CD8-positive, alpha-beta memory T cell (primary cell): ENCODE measurements at regions of chr7 and their contacts with region 1.

Region 1: DNA sequence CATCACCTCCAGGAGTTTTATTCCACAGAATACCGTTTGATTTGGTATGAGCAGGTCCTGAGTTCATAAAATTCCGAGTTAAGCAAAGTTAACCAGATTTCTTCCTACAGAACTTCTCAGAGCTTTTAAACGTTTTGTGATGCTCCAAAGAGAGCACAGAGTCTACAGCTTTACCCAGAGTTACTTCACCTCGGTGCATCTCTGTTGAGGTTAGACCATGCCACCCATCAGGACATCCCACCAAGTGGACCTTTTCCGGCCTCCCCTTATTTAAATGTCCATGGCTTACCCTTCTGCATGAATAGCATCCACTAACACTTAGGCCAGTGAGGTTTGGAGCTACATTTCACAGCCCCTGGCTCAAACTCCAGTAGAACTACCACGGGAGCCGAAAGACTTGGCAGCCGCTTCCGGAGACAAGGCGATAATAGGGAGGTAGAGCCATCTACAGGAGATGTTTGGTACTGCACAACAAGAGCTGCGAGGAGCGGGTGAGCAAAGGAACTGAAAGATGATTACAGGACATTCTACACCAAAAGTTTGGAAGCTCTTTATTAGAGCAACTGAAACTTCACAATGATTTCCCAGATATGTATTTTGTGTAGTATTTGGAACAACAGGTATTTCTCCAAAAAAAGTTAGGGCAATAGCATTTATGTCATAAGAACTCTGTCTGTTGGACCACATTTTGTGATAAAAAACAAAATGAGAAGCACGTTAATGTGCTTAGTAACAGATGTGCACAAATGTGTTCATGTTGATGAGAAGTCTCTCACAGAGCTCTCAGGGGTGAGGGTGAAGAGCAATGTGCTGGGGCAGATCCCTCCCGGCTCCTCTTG is 174.7 kb downstream of the HERPUD2 start:
- DNase-seq: peak; percentile 19 to 59 (median 25)
- H3K4me3 ChIP-seq: no peak overlapping the region
- H3K4me3 Mint-ChIP-seq: no peak overlapping the region
- H3K27ac ChIP-seq: no peak overlapping the region
- H3K27ac Mint-ChIP-seq: no peak overlapping the region
- H3K4me1 ChIP-seq: no peaks in the 10 kb centered on the region
- H3K4me1 Mint-ChIP-seq: no peaks in the 10 kb centered on the region
- H3K27me3 ChIP-seq: no peaks in the 10 kb centered on the region
- H3K27me3 Mint-ChIP-seq: peaks cover 3 to 20% of the 10 kb centered on the region in 2 donors

Region 2: DNA sequence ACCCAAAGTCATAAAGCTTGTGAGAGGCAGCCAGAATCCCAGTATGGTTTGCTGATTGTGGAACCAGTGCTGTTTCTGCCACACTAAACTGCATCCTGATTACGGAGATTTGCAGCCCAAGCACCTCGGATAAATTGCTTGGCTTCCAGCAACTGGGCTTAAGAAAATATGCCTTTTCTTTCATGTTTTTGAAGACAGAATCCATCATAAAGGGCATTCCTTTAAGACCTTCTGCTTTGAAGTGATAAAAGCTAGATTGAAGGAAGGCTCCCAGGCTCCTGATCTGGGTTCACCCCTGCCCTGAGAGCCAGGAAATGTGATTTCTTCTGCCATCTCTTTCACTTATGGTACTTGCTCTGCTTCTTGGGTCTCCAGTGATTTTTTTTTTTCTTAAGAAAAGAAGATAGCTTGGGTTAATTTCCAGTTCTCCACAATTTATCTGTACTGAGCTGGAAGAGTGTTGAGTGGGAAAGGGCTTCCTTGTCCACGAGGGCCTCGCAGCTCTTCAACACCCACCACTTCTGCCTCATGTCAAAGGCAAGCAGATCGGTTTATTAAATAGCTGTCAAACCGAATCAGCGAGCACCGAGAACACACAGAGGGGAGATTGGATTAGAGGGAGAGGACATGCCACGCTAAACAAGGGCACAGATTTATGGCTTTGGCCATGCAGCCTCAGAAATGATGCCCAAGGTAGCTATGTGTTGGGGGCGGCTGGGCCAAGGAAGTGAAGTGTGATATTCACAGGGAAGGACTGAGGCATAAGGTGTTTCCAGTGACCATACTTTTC is 171.4 kb before region 1 on chr7:
- CTCF ChIA-PET with region 1: no interaction called
- POLR2A ChIA-PET with region 1: no interaction called
- DNase-seq: no peak
- H3K4me3 ChIP-seq: no peak overlapping the region
- H3K4me3 Mint-ChIP-seq: no peak overlapping the region
- H3K27ac ChIP-seq: no peak overlapping the region
- H3K27ac Mint-ChIP-seq: no peak overlapping the region
- H3K4me1 ChIP-seq: no peaks in the 10 kb centered on the region
- H3K4me1 Mint-ChIP-seq: no peaks in the 10 kb centered on the region
- H3K27me3 ChIP-seq: no peaks in the 10 kb centered on the region
- H3K27me3 Mint-ChIP-seq: peaks cover 11 to 23% of the 10 kb centered on the region in 2 donors

Region 3: DNA sequence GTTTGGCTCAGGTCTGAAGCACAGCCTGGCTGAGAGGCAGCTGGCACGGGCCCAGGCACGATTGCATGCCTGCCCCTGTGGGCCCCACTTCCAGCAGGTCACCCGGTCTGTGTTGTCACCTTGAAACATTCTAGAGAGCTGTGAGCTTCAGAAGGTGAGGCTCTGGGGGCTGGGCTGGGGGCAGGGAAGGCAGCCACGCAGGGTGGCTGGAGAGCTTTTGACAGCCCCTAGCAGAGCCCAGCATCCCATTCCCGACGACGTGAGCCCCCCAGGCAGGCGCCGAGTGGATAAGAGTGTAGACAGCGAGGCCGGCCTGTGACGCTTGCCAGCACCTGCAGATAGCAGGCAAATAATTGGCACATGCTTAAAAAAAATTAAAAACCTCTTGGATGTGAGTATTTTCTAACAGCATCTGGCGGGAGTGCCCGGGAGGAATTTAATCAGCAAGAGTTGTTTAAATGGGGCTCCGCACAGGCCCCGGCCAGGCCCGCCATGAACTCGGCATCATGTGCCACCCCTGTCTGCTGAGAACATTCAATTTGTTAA is 54.3 kb before region 1 on chr7:
- CTCF ChIA-PET with region 1: no interaction called
- POLR2A ChIA-PET with region 1: no interaction called
- DNase-seq: no peak
- H3K4me3 ChIP-seq: no peak overlapping the region
- H3K4me3 Mint-ChIP-seq: no peak overlapping the region
- H3K27ac ChIP-seq: no peak overlapping the region
- H3K27ac Mint-ChIP-seq: no peak overlapping the region
- H3K4me1 ChIP-seq: no peaks in the 10 kb centered on the region
- H3K4me1 Mint-ChIP-seq: no peaks in the 10 kb centered on the region
- H3K27me3 ChIP-seq: no peaks in the 10 kb centered on the region
- H3K27me3 Mint-ChIP-seq: peaks cover 35 to 48% of the 10 kb centered on the region in 2 donors

Region 4: GRCh38 chr7:35508623-35509400 is 11.4 kb before region 1 on chr7:
- CTCF ChIA-PET with region 1: interaction called, 10 read pairs
- POLR2A ChIA-PET with region 1: no interaction called
- DNase-seq: no peak
- H3K4me3 ChIP-seq: no peak overlapping the region
- H3K4me3 Mint-ChIP-seq: no peak overlapping the region
- H3K27ac ChIP-seq: no peak overlapping the region
- H3K27ac Mint-ChIP-seq: no peak overlapping the region
- H3K4me1 ChIP-seq: no peaks in the 10 kb centered on the region
- H3K4me1 Mint-ChIP-seq: no peaks in the 10 kb centered on the region
- H3K27me3 ChIP-seq: no peaks in the 10 kb centered on the region
- H3K27me3 Mint-ChIP-seq: peaks cover 4 to 22% of the 10 kb centered on the region in 2 donors

Region 5: DNA sequence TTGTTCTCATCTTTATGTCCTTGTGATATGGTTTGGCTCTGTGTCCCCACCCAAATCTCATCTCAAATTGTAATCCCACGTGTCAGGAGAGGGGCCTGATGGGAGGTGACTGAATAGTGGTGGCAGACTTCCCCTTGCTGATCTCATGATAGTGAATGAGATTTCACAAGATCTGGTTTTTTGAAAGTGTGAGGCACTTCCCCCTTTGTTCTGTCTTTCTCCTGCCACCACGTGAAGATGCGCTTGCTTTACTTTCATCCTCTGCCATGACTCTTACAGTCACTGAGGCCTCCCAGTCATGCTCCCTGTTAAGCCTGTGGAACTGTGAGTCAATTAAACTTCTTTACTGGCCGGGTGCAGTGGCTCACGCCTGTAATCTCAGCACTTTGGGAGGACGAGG is 13.7 kb after region 1 on chr7:
- CTCF ChIA-PET with region 1: interaction called, 17 read pairs
- POLR2A ChIA-PET with region 1: no interaction called
- DNase-seq: no peak
- H3K4me3 ChIP-seq: no peak overlapping the region
- H3K4me3 Mint-ChIP-seq: no peak overlapping the region
- H3K27ac ChIP-seq: no peak overlapping the region
- H3K27ac Mint-ChIP-seq: no peak overlapping the region
- H3K4me1 ChIP-seq: no peaks in the 10 kb centered on the region
- H3K4me1 Mint-ChIP-seq: peaks cover 0 to 5% (median 0%) of the 10 kb centered on the region in 3 donors
- H3K27me3 ChIP-seq: no peaks in the 10 kb centered on the region
- H3K27me3 Mint-ChIP-seq: peaks cover 8 to 27% of the 10 kb centered on the region in 2 donors

Region 6: GRCh38 chr7:35624299-35625186 is 104.4 kb after region 1 on chr7:
- CTCF ChIA-PET with region 1: no interaction called
- POLR2A ChIA-PET with region 1: no interaction called
- DNase-seq: peak in 4 of 5 donors; percentile 12 to 51 (median 30)
- H3K4me3 ChIP-seq: no peak overlapping the region
- H3K4me3 Mint-ChIP-seq: no peak overlapping the region
- H3K27ac ChIP-seq: no peak overlapping the region
- H3K27ac Mint-ChIP-seq: peak overlapping the region in 2 of 8 donors; percentile 58 to 71
- H3K4me1 ChIP-seq: no peaks in the 10 kb centered on the region
- H3K4me1 Mint-ChIP-seq: peaks cover 2 to 9% (median 5%) of the 10 kb centered on the region in 3 donors
- H3K27me3 ChIP-seq: no peaks in the 10 kb centered on the region
- H3K27me3 Mint-ChIP-seq: peaks cover 0 to 2% of the 10 kb centered on the region in 2 donors